ENCODE measurements at regions of chr19 and their contacts with region 1.

Region 1: DNA sequence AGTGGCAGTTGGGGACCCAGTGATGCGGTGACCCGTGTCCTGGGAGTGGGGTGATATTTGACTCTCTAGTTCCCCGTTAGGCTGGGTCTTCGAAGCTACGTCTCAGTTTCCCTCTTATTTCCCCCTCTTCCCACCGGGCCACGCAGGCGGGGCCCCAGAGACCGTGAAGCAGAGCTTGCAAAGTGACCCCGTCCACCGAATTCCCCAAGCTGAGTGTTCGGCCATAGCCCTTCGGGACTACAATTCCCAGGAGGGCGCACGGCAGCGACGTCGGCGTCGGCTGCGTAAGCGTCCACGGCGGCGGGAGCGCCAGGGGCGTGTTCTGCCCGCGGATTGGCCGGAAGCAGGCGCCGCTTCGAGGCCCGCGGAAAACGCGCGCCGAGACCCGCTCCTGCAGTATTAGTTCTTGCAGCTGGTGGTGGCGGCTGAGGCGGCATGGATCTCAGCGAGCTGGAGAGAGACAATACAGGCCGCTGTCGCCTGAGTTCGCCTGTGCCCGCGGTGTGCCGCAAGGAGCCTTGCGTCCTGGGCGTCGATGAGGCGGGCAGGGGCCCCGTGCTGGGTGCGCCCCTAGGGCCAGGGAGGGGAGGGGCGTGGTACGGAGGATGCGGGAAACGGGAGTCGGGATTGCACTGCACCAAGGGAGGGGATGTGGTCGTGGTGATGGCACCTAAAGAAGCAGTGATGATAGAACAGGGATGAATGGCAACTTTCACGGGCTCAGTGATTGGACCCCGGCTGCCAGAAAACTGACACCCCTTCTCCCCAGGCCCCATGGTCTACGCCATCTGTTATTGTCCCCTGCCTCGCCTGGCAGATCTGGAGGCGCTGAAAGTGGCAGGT is at the start of gene RNASEH2A:
- DNase-seq: peak; percentile 98
- CTCF ChIP-seq: no peak

Region 2: DNA sequence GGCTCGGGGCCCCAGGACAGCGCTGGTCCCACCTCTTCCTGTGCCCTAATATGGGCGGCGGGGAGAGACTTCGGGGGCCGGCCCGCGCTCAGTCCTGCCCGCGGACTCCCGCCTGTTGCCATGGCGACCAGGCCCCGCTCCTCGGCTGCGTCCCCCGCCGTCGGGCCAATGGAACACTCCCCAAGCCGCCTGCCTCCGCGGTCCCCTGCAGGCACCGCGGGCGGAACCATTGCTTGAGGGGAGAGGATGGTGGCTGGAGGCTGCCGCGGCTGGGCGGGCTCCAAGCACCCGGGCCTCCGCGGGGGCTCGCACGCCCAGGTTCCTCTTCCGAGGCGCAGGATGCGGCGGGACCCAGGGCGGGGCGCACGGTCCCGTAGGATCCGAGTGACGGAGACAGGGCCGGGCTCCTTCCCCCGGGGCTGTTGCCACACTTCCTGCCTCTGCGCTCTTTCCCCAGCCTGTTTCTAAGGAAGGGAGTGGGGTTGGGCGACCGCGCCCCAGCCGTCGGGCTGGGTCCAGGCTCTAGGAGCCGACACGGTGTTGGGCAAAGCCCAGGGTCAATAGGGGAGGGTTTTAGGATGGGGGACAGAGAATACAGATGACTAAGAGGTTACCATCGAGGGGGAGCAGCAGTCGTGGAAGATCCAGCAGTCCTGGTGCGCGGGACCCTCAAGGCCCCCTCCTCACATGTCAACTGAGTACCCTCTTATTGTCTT is 16.4 kb before region 1 on chr19:
- CTCF ChIA-PET with region 1: interaction called, 6 read pairs
- POLR2A ChIA-PET with region 1: interaction called, 15 read pairs
- DNase-seq: peak; percentile 94
- CTCF ChIP-seq: no peak

Region 3: GRCh38 chr19:12796146-12797071 is 10.1 kb before region 1 on chr19:
- CTCF ChIA-PET with region 1: interaction called, 34 read pairs
- POLR2A ChIA-PET with region 1: interaction called, 15 read pairs
- DNase-seq: peak; percentile 67
- CTCF ChIP-seq: peak; percentile 96